ENCODE measurements at regions of chr6 and their contacts with region 1.

Region 1: GRCh38 chr6:54002116-54002515 is 109.1 kb upstream of the MLIP start:
- DNase-seq: no peak

Region 2: GRCh38 chr6:54074578-54075195 is 72.6 kb after region 1 on chr6:
- intact Hi-C with region 1: loop called in 1 of 2 experiments (anchors 10 kb)
- DNase-seq: no peak

Measured in posterior vena cava (tissue), 2 donors.